ENCODE measurements at regions of chr20 and their contacts with region 1.

Region 1: GRCh38 chr20:32155017-32155981 is 45.8 kb downstream of the TM9SF4 start:
- DNase-seq: peak; percentile 92
- H3K4me3 ChIP-seq: no peak overlapping the region
- H3K27ac ChIP-seq: peak overlapping the region; percentile 30
- H3K4me1 ChIP-seq: peaks cover 11% of the 10 kb centered on the region
- H3K27me3 ChIP-seq: no peaks in the 10 kb centered on the region
- CTCF ChIP-seq: peak; percentile 18 to 35

Region 2: GRCh38 chr20:32189691-32190615 is 34.7 kb after region 1 on chr20:
- CTCF ChIA-PET with region 1: no interaction called
- dilution Hi-C with region 1: loop called (anchors 5 kb)
- in situ Hi-C with region 1: no loop called
- intact Hi-C with region 1: no loop called
- DNase-seq: no peak
- H3K4me3 ChIP-seq: peak overlapping the region; percentile 21 to 48 (median 33)
- H3K27ac ChIP-seq: no peak overlapping the region
- H3K4me1 ChIP-seq: peaks cover 12% of the 10 kb centered on the region
- H3K27me3 ChIP-seq: no peaks in the 10 kb centered on the region
- CTCF ChIP-seq: no peak

Region 3: GRCh38 chr20:32621071-32621890 is 466.0 kb after region 1 on chr20:
- CTCF ChIA-PET with region 1: no interaction called
- dilution Hi-C with region 1: loop called (anchors 5 kb)
- in situ Hi-C with region 1: no loop called
- intact Hi-C with region 1: no loop called
- DNase-seq: no peak
- H3K4me3 ChIP-seq: no peak overlapping the region
- H3K27ac ChIP-seq: no peak overlapping the region
- H3K4me1 ChIP-seq: no peaks in the 10 kb centered on the region
- H3K27me3 ChIP-seq: peaks cover 2% of the 10 kb centered on the region
- CTCF ChIP-seq: no peak

Measured in mammary epithelial cell (primary cell).